SK-N-SH (cell line): ENCODE measurements at regions of chr18 and their contacts with region 1.

Region 1: DNA sequence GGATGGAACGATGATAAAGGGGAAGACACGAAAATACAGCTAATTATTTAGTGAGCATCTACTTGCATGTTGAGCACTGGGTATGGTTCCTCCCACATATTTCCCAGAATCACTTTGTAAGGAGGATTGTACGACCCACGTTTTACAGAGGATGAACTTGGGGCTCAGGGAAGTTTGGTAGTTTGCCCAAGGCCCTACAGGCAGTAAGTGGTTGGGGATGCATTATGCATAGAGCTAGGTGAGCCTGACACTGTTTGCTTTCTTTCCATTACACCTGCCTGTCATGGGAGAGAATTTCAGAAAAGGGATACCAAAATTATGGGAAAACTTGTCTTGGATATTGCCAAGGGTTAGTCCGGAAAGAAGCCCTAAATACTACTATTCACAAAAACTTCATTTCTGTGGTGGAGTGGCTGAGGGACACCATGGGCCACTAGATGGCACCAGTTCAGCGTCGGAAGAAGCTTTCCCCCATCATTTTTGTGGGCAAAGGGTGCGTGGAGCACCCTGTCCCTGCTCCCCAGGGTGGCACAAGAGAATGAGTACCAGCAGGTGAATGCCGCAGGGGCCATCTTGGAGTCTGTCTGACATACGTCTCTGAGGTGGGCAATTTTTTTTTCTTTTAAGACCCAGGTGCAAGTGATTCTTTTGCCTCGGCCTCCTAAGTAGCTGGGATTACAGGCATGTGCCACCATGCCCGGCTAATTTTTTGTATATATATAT is 23.5 kb upstream of the C18orf32 start:
- DNase-seq: peak; percentile 69
- H3K4me3 ChIP-seq: no peak overlapping the region
- H3K27ac ChIP-seq: no peak overlapping the region
- H3K4me1 ChIP-seq: no peaks in the 10 kb centered on the region
- H3K27me3 ChIP-seq: no peaks in the 10 kb centered on the region
- CTCF ChIP-seq: peak; percentile 97
- EP300 ChIP-seq: no peak
- RAD21 ChIP-seq: peak; percentile 92

Region 2: DNA sequence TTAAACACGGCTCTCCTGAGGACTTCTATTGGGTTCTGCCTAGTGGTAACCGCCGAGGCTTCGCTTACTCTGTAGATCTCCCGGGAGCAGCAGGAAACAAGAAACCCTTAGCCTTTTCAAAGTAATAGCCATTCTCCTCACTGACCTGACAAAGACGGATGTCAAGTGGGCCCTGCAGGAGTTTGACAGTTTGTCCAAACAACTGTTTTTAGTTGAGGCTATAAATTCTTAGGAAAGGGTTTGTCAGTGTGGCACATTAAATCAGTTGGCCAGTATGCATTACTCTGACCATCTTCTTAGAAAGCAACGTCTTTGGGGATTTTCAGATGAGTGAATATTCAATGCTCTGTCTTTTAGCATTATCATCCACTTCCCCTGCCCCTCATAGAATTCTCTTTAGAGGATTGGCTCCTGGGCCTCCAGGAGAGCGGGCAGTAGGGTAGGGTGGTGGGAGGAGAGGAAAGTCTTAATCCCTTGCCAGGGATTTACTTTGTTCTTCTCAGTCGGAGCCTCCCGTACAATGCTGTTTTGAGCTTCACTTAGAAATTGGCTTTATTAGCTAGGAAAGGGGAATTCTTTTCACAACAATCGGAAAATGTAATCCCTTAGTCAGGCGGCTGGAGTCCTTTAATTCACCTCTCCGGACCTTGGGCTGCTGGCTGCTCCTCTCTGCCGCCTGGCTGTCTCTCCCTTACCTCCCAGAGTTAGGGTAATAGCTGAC is 10.2 kb before region 1 on chr18:
- CTCF ChIA-PET with region 1: interaction called, 26 read pairs
- POLR2A ChIA-PET with region 1: no interaction called
- DNase-seq: no peak
- H3K4me3 ChIP-seq: no peak overlapping the region
- H3K27ac ChIP-seq: no peak overlapping the region
- H3K4me1 ChIP-seq: peaks cover 0 to 2% of the 10 kb centered on the region in 2 experiments; a peak in 1 of 4 replicates
- H3K27me3 ChIP-seq: no peaks in the 10 kb centered on the region
- CTCF ChIP-seq: no peak
- EP300 ChIP-seq: no peak
- RAD21 ChIP-seq: no peak

Region 3: GRCh38 chr18:49537232-49537896 is 26.8 kb after region 1 on chr18:
- CTCF ChIA-PET with region 1: interaction called, 12 read pairs
- POLR2A ChIA-PET with region 1: no interaction called
- DNase-seq: no peak
- H3K4me3 ChIP-seq: no peak overlapping the region
- H3K27ac ChIP-seq: no peak overlapping the region
- H3K4me1 ChIP-seq: no peaks in the 10 kb centered on the region; a peak in 1 of 4 replicates
- H3K27me3 ChIP-seq: no peaks in the 10 kb centered on the region
- CTCF ChIP-seq: no peak
- EP300 ChIP-seq: no peak
- RAD21 ChIP-seq: no peak

Region 4: GRCh38 chr18:49561289-49562193 is 51.0 kb after region 1 on chr18 and contains the start of gene LIPG:
- CTCF ChIA-PET with region 1: interaction called, 16 read pairs
- POLR2A ChIA-PET with region 1: no interaction called
- DNase-seq: peak; percentile 66
- H3K4me3 ChIP-seq: peak within 1 kb of the TSS; percentile 47 to 70
- H3K27ac ChIP-seq: peak within 1 kb of the TSS in 1 of 2 experiments; percentile 5; a peak in 1 of 4 replicates
- H3K4me1 ChIP-seq: peaks cover 23 to 33% of the 10 kb centered on the region in 2 experiments; a peak in 3 of 4 replicates
- H3K27me3 ChIP-seq: no peaks in the 10 kb centered on the region
- CTCF ChIP-seq: no peak
- EP300 ChIP-seq: no peak
- RAD21 ChIP-seq: no peak
- polyA plus RNA-seq, gene LIPG: 3.2 and 4.4 TPM in 2 replicates

Region 5: DNA sequence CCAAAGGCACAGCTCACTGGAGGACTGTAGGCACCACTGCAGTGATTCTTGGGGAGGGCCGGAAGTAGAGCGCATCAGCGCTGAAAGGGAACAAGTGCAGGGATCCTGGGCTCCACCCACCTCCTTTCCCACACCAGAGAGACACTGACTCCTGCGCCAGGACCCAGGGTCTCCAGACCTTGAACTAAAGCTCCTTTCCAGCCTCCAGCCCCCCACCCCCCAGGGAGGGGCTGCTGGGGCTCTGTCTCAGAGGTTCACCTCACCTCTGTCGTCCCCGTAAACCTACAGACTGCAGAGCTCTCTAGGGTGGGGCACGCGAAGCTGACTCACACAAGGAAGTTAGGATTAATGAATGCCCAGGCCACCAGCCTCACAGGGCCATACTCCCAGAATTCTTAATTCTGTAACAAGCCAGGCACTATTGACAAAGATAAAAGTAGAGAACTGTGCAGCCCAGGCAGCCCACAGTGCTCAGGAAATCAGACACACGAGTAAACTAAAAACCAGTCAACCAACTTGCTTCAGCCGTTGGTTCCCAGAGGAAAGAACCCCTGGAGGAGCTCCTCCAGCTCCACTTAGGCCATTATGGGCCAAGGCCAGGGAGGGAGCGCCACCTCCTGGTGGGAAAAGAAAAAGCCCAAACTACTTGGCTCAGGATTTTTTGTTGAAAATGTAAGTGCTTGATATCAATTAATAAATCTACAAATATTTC is 347.9 kb after region 1 on chr18:
- CTCF ChIA-PET with region 1: interaction called, 254 read pairs
- POLR2A ChIA-PET with region 1: no interaction called
- DNase-seq: peak; percentile 83
- H3K4me3 ChIP-seq: peak overlapping the region in 1 of 2 experiments; percentile 30; a peak in 1 of 4 replicates
- H3K27ac ChIP-seq: no peak overlapping the region
- H3K4me1 ChIP-seq: peaks cover 0 to 3% of the 10 kb centered on the region in 2 experiments; a peak in 2 of 4 replicates
- H3K27me3 ChIP-seq: no peaks in the 10 kb centered on the region
- CTCF ChIP-seq: peak; percentile 97
- EP300 ChIP-seq: no peak
- RAD21 ChIP-seq: peak; percentile 97